ENCODE measurements at regions of chr15 and their contacts with region 1.

Region 1: GRCh38 chr15:22838292-22839042 is at the start of gene NIPA2:
- DNase-seq: peak; percentile 98 to 99 (median 98)
- ATAC-seq: peak; percentile 99
- H3K4me3 ChIP-seq: peak within 1 kb of the TSS; percentile 72 to 90
- H3K27ac ChIP-seq: peak within 1 kb of the TSS; percentile 92 to 99
- H3K4me1 ChIP-seq: peaks cover 5 to 36% of the 10 kb centered on the region in 2 donors
- H3K27me3 ChIP-seq: no peaks in the 10 kb centered on the region
- CTCF ChIP-seq: no peak
- polyA plus RNA-seq, gene NIPA2: 38.3 to 51.0 (median 42.6) TPM

Region 2: GRCh38 chr15:22786868-22787698 is 51.4 kb before region 1 on chr15:
- intact Hi-C with region 1: loop called in 1 of 2 experiments (anchors 10 kb)
- DNase-seq: peak in 1 of 4 donors; percentile 23
- ATAC-seq: peak; percentile 39
- H3K4me3 ChIP-seq: peak overlapping the region; percentile 65 to 66
- H3K27ac ChIP-seq: peak overlapping the region; percentile 26 to 70
- H3K4me1 ChIP-seq: peaks cover 0 to 19% of the 10 kb centered on the region in 2 donors
- H3K27me3 ChIP-seq: peaks cover 0 to 14% of the 10 kb centered on the region in 2 donors
- CTCF ChIP-seq: no peak